Activated T-helper 1 cell treated with anti-CD3 and anti-CD28 coated beads, Interleukin-12 subunit alpha, Interleukin-12 subunit beta, Interleukin-2, Interleukin-4 antibody, amounts not matched to agents 30 ng/mL and 10 ng/mL and 1 ng/mL, durations not matched to agents 14 hours and 24 hours and 36 hours (primary cell): ENCODE measurements at regions of chr2 and their contacts with region 1.

Region 1: GRCh38 chr2:179031731-179032408 is 18.1 kb downstream of the CCDC141 start:
- DNase-seq: peak; percentile 27
- H3K4me3 Mint-ChIP-seq: peak overlapping the region; percentile 62
- H3K27ac Mint-ChIP-seq: peak overlapping the region; percentile 82
- H3K4me1 Mint-ChIP-seq: peaks cover 29% of the 10 kb centered on the region
- H3K27me3 Mint-ChIP-seq: no peaks in the 10 kb centered on the region

Region 2: DNA sequence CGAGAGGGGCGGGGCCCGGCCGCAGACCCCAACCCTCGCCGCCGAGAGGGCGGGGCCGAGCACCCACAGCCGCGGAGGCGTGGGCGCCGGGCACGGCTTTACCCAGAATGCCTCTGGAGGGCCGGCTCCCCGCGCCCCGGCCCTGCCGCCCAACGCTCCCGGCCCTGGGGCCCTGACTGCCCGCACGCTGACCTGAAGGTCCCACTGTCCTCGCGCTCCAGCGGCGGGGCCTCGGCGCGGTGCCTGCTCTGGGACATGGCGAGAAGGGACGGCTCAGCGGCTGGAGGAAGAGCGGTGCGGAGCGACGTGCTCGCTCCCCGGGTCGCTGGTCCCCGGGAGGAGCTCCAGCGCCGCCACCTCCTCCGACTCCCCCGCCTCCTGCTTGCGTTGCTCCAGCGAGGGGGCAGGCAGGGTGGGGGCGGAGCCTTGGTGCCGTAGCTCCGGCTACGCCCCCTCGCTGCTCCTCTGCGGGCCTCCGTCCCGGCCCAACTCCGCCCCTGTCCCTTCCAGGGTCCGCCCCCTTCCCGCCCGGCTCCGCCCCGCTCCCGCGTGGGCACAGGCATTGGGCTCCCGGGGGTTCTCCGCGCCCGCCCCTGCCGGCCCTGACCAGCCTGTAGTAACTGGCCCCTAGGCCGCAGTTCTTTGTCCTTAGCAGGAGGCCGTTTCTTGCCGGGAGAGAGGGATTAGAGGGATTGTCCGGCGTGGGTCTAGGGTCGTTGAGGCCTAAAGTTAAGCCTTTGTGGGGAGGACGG is 580.9 kb before region 1 on chr2 and contains the starts of genes PJVK and PRKRA:
- intact Hi-C with region 1: loop called (anchors 5 kb)
- DNase-seq: peak; percentile 97
- H3K4me3 Mint-ChIP-seq: peak within 1 kb of the TSS; percentile 91
- H3K27ac Mint-ChIP-seq: peak within 1 kb of the TSS; percentile 95
- H3K4me1 Mint-ChIP-seq: peaks cover 35% of the 10 kb centered on the region
- H3K27me3 Mint-ChIP-seq: peaks cover 3% of the 10 kb centered on the region
- total RNA-seq, gene PJVK: 1.1 and 2.5 TPM in 2 replicates
- total RNA-seq, gene PRKRA: 45.1 and 50.5 TPM in 2 replicates

Region 3: GRCh38 chr2:178718283-178718682 is 313.6 kb before region 1 on chr2:
- intact Hi-C with region 1: no loop called
- DNase-seq: no peak
- H3K4me3 Mint-ChIP-seq: no peak overlapping the region
- H3K27ac Mint-ChIP-seq: no peak overlapping the region
- H3K4me1 Mint-ChIP-seq: no peaks in the 10 kb centered on the region
- H3K27me3 Mint-ChIP-seq: no peaks in the 10 kb centered on the region

Region 4: GRCh38 chr2:178796079-178796677 is 235.7 kb before region 1 on chr2:
- intact Hi-C with region 1: loop called (anchors 10 kb)
- DNase-seq: no peak
- H3K4me3 Mint-ChIP-seq: no peak overlapping the region
- H3K27ac Mint-ChIP-seq: no peak overlapping the region
- H3K4me1 Mint-ChIP-seq: no peaks in the 10 kb centered on the region
- H3K27me3 Mint-ChIP-seq: no peaks in the 10 kb centered on the region

Region 5: DNA sequence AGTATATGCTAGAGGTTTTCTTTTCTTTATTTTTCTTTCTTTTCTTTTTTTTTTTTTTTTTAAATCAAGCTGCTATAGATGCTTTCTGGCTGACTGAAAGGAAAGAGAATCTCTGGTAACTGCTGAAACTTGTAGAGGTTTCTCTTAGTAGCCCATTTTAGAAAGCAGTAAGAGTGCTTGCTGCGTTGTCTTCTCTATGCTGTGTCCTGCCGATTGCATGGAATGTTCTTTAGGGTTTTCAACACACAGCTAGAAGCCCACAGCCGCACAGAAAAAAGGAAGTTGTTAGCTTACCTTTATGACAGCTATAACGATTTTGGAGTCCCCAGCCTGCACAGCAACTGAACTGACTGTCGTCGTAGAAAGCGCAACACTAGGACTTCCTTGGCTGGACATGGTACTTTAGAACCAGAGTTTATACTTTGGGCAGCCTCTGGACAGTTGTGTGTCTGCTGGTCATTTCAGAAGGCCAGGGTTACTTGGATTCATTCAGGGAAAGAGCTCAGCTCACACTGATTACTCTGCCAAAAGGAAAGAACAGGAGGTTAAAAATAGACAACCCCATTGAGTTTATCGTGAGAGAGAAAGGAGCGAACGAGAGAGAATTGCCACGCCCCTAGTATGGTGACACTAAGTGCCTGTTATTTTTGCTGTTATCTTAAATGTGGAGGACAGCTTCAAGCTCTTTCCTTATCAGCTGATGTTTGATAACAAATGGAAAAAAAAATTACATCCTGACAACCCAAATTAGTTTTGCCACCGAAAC is 17.9 kb after region 1 on chr2 and contains the start of gene CCDC141:
- intact Hi-C with region 1: loop called (anchors 2 kb)
- DNase-seq: peak; percentile 8
- H3K4me3 Mint-ChIP-seq: peak within 1 kb of the TSS; percentile 83
- H3K27ac Mint-ChIP-seq: peak within 1 kb of the TSS; percentile 44
- H3K4me1 Mint-ChIP-seq: peaks cover 41% of the 10 kb centered on the region
- H3K27me3 Mint-ChIP-seq: no peaks in the 10 kb centered on the region
- total RNA-seq, gene CCDC141: 0.78 and 1.2 TPM in 2 replicates

Region 6: DNA sequence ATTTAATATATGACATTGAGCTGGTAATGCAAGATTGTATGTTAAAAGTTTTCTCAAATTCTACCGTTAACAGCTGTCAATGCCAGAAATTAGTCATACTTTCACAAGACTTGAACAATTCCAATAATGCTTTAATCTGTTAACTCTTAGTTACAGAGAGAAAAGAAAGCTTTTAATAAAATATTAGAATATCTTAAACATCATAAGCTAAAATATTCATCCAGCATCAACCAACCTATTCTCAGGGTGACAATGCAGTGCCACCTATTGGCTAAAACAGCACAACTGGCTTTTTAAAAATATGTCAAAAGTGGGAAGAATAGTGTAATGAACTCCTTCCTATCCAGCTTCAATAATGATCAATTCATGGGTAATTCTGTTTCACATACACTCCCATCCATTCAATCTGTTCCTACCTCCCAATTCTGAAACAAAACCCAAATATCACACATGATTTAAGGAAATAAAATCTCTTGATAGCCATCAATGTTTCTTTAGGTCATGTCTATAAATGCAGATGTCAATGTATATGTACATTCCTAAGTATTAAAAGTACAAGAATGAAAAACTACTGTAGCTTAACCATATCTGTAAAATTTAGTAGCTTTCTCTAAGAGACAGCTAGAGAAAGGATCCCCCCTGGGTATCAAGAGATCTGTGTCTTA is 97.8 kb after region 1 on chr2:
- intact Hi-C with region 1: loop called (anchors 5 kb)
- DNase-seq: no peak
- H3K4me3 Mint-ChIP-seq: no peak overlapping the region
- H3K27ac Mint-ChIP-seq: no peak overlapping the region
- H3K4me1 Mint-ChIP-seq: no peaks in the 10 kb centered on the region
- H3K27me3 Mint-ChIP-seq: no peaks in the 10 kb centered on the region

Region 7: GRCh38 chr2:179253226-179253625 is 221.4 kb after region 1 on chr2:
- intact Hi-C with region 1: loop called (anchors 5 kb)
- DNase-seq: no peak
- H3K4me3 Mint-ChIP-seq: peak overlapping the region; percentile 12
- H3K27ac Mint-ChIP-seq: peak overlapping the region; percentile 73
- H3K4me1 Mint-ChIP-seq: peaks cover 61% of the 10 kb centered on the region
- H3K27me3 Mint-ChIP-seq: no peaks in the 10 kb centered on the region